ENCODE measurements at regions of chr17 and their contacts with region 1.

Region 1: GRCh38 chr17:3012926-3013581 is 50.4 kb downstream of the OR1D5 start:
- DNase-seq: peak; percentile 58
- ATAC-seq: peak; percentile 98
- H3K4me3 Mint-ChIP-seq: no peak overlapping the region
- H3K27ac Mint-ChIP-seq: no peak overlapping the region
- H3K4me1 Mint-ChIP-seq: no peaks in the 10 kb centered on the region
- H3K27me3 Mint-ChIP-seq: no peaks in the 10 kb centered on the region
- CTCF ChIP-seq: peak; percentile 87

Region 2: DNA sequence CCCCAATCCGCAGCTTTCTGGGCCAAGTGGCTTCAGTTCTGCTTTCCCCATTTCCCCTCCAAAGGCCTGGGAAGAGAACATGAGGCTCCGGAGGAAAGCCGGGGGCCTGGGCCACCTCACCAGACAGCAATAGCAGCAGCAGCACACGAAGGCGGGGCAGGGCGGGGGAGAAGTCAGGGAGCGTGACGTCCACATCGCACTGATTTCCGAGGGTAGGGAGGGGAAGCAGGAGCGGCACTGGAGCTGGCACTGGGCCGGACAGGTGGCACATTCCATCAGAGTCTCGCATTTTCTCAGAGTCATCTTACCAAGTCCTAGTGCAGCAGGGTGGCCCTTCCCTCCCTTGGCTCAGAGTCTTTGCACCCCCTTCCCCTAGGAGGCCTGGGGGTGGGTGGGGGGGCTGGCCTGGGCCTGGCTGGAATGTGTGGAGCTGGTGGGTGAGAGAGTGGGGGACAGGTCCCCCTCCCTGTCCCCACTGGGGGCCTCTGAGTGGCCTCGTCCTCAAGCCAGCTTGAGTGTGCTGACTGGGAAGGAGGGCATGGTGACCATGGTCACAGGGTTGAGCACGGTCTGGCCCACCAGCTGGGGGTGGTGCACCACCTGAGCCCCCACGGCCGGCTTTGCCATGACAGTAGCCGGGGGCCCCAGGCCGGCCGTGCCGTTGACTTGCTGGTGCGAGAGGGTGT is 626.5 kb before region 1 on chr17:
- CTCF ChIA-PET with region 1: interaction called, 5 read pairs
- POLR2A ChIA-PET with region 1: no interaction called
- intact Hi-C with region 1: loop called (anchors 2 kb)
- DNase-seq: no peak
- ATAC-seq: no peak
- H3K4me3 Mint-ChIP-seq: no peak overlapping the region
- H3K27ac Mint-ChIP-seq: no peak overlapping the region
- H3K4me1 Mint-ChIP-seq: peaks cover 14% of the 10 kb centered on the region
- H3K27me3 Mint-ChIP-seq: no peaks in the 10 kb centered on the region
- CTCF ChIP-seq: no peak

Region 3: DNA sequence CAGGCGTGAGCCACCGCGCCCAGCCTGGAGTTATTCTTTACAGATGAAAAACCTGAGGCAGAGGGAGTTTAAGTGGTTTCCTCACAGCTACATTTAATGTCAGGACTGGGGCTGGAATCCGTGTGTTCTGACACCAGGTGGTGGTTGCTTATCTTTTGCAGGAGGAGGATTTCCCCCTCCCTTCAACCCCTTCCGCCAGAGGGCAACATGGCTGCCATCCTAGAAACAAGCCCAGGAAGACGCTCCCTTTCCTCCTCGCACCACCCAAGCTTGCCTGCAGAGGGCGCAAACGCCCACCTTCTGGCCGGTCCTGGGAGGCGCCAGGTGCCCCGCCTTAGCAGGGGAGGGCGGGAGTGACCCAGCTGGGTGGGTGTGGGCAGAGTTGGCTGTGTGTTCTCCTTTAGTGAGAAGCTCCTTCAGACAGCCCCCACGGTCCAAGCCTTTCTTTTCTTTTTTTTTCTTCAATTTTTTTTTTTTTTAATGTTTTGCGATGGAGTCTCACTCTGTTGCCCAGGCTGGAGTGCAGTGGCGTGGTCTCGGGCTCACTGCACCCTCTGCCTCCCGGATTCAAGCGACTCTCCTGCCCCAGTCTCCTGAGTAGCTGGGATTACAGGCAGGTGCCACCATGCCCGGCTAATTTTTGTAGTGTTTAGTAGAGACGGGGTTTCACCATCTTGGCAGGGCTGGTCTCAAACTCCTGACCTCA is 226.7 kb before region 1 on chr17:
- CTCF ChIA-PET with region 1: interaction called, 49 read pairs
- POLR2A ChIA-PET with region 1: interaction called, 4 read pairs
- intact Hi-C with region 1: loop called (anchors 1 kb)
- DNase-seq: peak; percentile 88
- ATAC-seq: peak; percentile 98
- H3K4me3 Mint-ChIP-seq: no peak overlapping the region
- H3K27ac Mint-ChIP-seq: no peak overlapping the region
- H3K4me1 Mint-ChIP-seq: peaks cover 25% of the 10 kb centered on the region
- H3K27me3 Mint-ChIP-seq: no peaks in the 10 kb centered on the region
- CTCF ChIP-seq: peak; percentile 38

Region 4: GRCh38 chr17:2847381-2848333 is 165.4 kb before region 1 on chr17:
- CTCF ChIA-PET with region 1: interaction called, 85 read pairs
- POLR2A ChIA-PET with region 1: interaction called, 19 read pairs
- intact Hi-C with region 1: loop called (anchors 1 kb)
- DNase-seq: no peak
- ATAC-seq: no peak
- H3K4me3 Mint-ChIP-seq: no peak overlapping the region
- H3K27ac Mint-ChIP-seq: no peak overlapping the region
- H3K4me1 Mint-ChIP-seq: peaks cover 15% of the 10 kb centered on the region
- H3K27me3 Mint-ChIP-seq: peaks cover 31% of the 10 kb centered on the region
- CTCF ChIP-seq: no peak

Region 5: DNA sequence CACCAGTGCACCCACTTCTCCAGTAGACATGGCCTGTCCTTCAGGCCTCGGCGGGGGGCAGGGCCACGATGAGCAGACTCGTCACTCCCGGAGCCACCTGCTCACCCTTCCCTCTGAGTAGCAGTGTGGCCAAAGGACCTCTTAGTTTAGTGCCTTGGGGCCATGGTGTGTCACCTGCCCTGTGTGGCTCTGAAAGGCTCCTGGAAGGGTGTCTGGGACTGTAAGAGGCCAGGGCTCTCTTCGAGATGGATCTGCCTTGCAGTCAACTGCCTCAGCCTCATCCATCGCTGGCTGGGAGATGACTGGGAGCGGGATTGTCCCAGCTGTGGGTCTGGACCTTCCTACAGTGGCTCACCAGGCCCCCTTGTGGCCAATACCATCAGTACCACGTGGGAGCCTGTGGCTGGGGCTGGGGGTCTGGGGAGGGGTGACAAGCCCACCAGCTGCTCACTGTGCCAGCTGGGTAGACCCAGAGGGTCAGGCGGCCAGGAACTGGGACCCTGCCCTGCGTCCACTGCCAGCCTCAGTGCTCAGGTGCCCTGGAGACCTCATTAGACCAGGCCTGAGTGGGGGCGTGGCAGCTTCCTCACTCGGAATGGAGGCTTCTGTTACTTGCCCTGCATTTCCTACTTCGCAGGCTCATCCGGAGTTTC is 83.0 kb before region 1 on chr17:
- CTCF ChIA-PET with region 1: interaction called, 9 read pairs
- POLR2A ChIA-PET with region 1: no interaction called
- intact Hi-C with region 1: loop called (anchors 1 kb)
- DNase-seq: peak; percentile 36
- ATAC-seq: peak; percentile 54
- H3K4me3 Mint-ChIP-seq: no peak overlapping the region
- H3K27ac Mint-ChIP-seq: no peak overlapping the region
- H3K4me1 Mint-ChIP-seq: peaks cover 25% of the 10 kb centered on the region
- H3K27me3 Mint-ChIP-seq: no peaks in the 10 kb centered on the region
- CTCF ChIP-seq: no peak

Region 6: GRCh38 chr17:2980904-2981246 is 32.2 kb before region 1 on chr17:
- CTCF ChIA-PET with region 1: no interaction called
- POLR2A ChIA-PET with region 1: no interaction called
- intact Hi-C with region 1: no loop called
- DNase-seq: no peak
- ATAC-seq: no peak
- H3K4me3 Mint-ChIP-seq: no peak overlapping the region
- H3K27ac Mint-ChIP-seq: no peak overlapping the region
- H3K4me1 Mint-ChIP-seq: no peaks in the 10 kb centered on the region
- H3K27me3 Mint-ChIP-seq: no peaks in the 10 kb centered on the region
- CTCF ChIP-seq: no peak

Region 7: DNA sequence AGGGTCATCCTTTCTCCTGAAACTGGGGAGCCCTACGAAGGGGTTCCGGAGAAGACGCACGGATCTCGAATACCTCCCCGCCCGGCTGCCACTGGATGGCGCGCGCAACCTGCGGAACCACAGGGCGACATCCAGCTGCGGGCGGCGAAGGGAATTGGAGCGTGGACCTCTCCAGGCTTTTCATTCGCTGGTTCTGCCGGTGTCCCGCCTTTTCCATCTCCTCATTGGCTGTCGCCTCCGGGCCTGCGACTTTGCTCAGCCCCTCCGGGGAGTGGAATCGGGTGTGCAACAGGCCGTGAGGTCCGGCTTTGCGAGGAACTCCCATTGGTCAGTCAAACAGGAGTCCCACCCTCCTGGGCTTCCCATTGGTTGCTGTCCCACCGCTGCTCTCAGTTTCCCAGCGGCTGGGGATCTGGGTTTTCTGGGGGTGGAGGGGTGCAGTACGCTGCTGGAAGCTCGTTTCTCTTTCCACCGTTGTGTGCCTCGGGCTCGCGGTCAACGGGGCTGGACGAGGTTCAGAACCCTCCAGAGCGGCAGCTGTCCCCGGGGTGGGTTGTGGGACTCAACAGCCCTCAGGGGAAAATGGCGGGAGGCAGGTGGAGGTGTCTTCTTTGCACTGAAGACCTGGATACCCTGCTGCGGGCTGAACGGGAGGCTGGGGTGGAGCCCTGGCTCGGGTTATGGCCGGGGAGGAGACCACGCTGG is 35.9 kb after region 1 on chr17:
- CTCF ChIA-PET with region 1: no interaction called
- POLR2A ChIA-PET with region 1: no interaction called
- intact Hi-C with region 1: no loop called
- DNase-seq: peak; percentile 80
- ATAC-seq: peak; percentile 98
- H3K4me3 Mint-ChIP-seq: peak overlapping the region; percentile 92
- H3K27ac Mint-ChIP-seq: peak overlapping the region; percentile 83
- H3K4me1 Mint-ChIP-seq: peaks cover 8% of the 10 kb centered on the region
- H3K27me3 Mint-ChIP-seq: no peaks in the 10 kb centered on the region
- CTCF ChIP-seq: no peak

Region 8: DNA sequence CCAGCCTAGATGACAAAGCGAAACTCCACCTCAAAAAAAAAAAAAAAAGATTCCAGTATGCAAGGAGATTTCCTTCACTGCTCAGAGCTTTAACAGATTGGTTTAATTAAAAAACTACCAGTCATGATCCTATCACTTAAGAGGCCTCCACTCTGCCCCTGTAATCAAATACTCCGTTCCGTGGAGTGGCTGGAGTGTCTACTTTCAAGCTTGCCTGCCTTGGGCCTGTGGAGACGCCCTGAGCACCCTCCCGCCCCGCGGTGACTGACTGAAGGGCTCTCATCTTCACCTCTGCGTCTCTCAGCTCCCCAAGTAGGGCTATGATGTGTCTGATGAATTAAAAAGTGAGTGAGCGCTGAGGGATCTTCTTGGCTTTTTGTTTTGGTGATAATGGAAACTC is 569.9 kb after region 1 on chr17:
- CTCF ChIA-PET with region 1: no interaction called
- POLR2A ChIA-PET with region 1: no interaction called
- intact Hi-C with region 1: no loop called
- DNase-seq: no peak
- ATAC-seq: no peak
- H3K4me3 Mint-ChIP-seq: no peak overlapping the region
- H3K27ac Mint-ChIP-seq: no peak overlapping the region
- H3K4me1 Mint-ChIP-seq: no peaks in the 10 kb centered on the region
- H3K27me3 Mint-ChIP-seq: no peaks in the 10 kb centered on the region
- CTCF ChIP-seq: no peak